Activated CD4-positive, alpha-beta T cell treated with anti-CD3 and anti-CD28 coated beads, Interleukin-2, amount 10 ng/mL, durations not matched to agents 7 days and 5 days (primary cell): ENCODE measurements at regions of chr5 and their contacts with region 1.

Region 1: DNA sequence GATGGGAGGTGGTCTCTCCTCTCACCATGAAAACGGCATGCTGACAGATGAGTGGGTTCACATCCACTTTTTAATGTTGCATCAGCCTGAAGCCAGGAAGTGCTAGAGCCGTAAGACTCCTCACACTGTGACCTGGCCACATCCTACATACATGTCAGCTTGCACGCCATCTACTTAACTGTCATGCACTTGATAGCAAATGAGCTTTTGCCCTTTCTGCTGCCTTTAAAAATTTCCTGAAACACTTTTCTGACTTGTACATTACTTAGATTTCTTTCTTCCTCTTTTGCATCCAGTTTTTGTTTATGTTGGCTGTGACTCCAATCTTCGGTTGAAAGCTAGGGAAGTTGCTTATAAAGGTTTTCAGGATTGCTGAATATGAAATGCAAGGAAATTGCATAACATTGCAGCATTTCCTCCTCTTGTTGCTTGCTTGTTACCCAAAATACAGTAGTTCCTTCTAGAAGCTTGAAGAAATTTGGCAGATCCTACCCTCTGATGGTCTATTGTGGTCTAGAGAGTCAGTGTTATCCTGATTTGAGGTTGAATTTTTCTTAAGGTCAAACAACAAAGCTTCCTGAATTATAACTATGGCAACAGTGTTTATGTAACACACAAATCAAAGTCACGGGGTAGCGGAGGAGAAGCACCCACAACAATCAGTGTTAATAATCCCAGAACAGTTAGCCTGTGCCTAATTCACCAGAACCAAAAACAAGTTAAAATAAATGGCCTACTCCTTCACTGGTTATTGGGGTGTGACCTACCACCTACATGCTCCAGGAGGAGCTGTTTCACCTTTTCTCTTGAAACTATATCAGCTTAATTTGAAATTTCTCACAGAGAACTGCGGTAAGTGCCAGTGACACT is 232.5 kb downstream of the ARHGAP26 start:
- DNase-seq: peak; percentile 84
- H3K4me3 Mint-ChIP-seq: peak overlapping the region; percentile 40
- H3K27ac Mint-ChIP-seq: peak overlapping the region; percentile 94
- H3K4me1 Mint-ChIP-seq: peaks cover 76% of the 10 kb centered on the region
- H3K27me3 Mint-ChIP-seq: no peaks in the 10 kb centered on the region

Region 2: GRCh38 chr5:142977363-142978051 is 25.2 kb before region 1 on chr5:
- CTCF ChIA-PET with region 1: interaction called, 13 read pairs
- POLR2A ChIA-PET with region 1: no interaction called
- DNase-seq: peak; percentile 44
- H3K4me3 Mint-ChIP-seq: peak overlapping the region; percentile 28
- H3K27ac Mint-ChIP-seq: peak overlapping the region; percentile 89
- H3K4me1 Mint-ChIP-seq: peaks cover 55% of the 10 kb centered on the region
- H3K27me3 Mint-ChIP-seq: no peaks in the 10 kb centered on the region

Region 3: GRCh38 chr5:142984011-142984410 is 18.7 kb before region 1 on chr5:
- CTCF ChIA-PET with region 1: interaction called, 18 read pairs
- POLR2A ChIA-PET with region 1: no interaction called
- DNase-seq: no peak
- H3K4me3 Mint-ChIP-seq: no peak overlapping the region
- H3K27ac Mint-ChIP-seq: no peak overlapping the region
- H3K4me1 Mint-ChIP-seq: peaks cover 47% of the 10 kb centered on the region
- H3K27me3 Mint-ChIP-seq: no peaks in the 10 kb centered on the region

Region 4: GRCh38 chr5:143014017-143014651 is 11.4 kb after region 1 on chr5:
- CTCF ChIA-PET with region 1: interaction called, 13 read pairs
- POLR2A ChIA-PET with region 1: no interaction called
- DNase-seq: no peak
- H3K4me3 Mint-ChIP-seq: no peak overlapping the region
- H3K27ac Mint-ChIP-seq: no peak overlapping the region
- H3K4me1 Mint-ChIP-seq: peaks cover 27% of the 10 kb centered on the region
- H3K27me3 Mint-ChIP-seq: no peaks in the 10 kb centered on the region

Region 5: GRCh38 chr5:143403593-143404415 is 401.1 kb after region 1 on chr5 and contains the start of gene NR3C1:
- CTCF ChIA-PET with region 1: interaction called, 21 read pairs
- POLR2A ChIA-PET with region 1: interaction called, 7 read pairs
- DNase-seq: peak; percentile 86
- H3K4me3 Mint-ChIP-seq: peak within 1 kb of the TSS; percentile 94
- H3K27ac Mint-ChIP-seq: peak within 1 kb of the TSS; percentile 100
- H3K4me1 Mint-ChIP-seq: peaks cover 52% of the 10 kb centered on the region
- H3K27me3 Mint-ChIP-seq: no peaks in the 10 kb centered on the region
- total RNA-seq, gene NR3C1: 62.7 to 73.1 TPM